AG04450 (cell line): ENCODE measurements at regions of chr2 and their contacts with region 1.

Region 1: DNA sequence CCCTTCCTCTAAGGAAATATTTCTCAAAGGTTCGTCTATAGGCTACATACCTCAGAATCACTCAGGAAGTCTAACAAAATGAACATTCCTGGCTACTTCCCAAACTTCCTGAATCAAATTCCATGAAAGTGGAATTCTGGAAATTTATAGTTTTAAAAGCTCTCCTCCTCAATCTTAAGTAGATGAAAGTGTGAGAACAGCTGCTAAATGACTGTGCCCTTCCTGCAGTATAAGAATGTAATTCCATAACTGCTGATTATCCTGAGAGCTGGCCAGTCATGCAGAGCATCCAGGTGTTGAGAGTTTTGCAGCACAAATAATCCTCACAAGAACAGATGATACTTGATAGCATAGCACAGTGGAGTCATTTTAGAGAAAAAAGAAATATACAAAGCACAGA is 265.0 kb downstream of the KCNJ3 start:
- DNase-seq: no peak
- H3K4me3 ChIP-seq: no peak overlapping the region
- H3K27ac ChIP-seq: no peak overlapping the region
- H3K27me3 ChIP-seq: no peaks in the 10 kb centered on the region
- CTCF ChIP-seq: no peak

Region 2: GRCh38 chr2:154623819-154624218 is 339.7 kb before region 1 on chr2:
- CTCF ChIA-PET with region 1: no interaction called
- POLR2A ChIA-PET with region 1: interaction called, 10 read pairs
- DNase-seq: no peak
- H3K4me3 ChIP-seq: no peak overlapping the region
- H3K27ac ChIP-seq: no peak overlapping the region
- H3K27me3 ChIP-seq: no peaks in the 10 kb centered on the region
- CTCF ChIP-seq: no peak